ENCODE measurements at regions of chr2 and their contacts with region 1.

Region 1: GRCh38 chr2:48946449-48947048 is 191.0 kb upstream of the LHCGR start:
- DNase-seq: peak; percentile 23
- H3K4me3 Mint-ChIP-seq: no peak overlapping the region
- H3K27ac Mint-ChIP-seq: no peak overlapping the region
- H3K4me1 Mint-ChIP-seq: no peaks in the 10 kb centered on the region
- H3K27me3 Mint-ChIP-seq: peaks cover 2% of the 10 kb centered on the region

Region 2: GRCh38 chr2:48600204-48600813 is 346.2 kb before region 1 on chr2:
- CTCF ChIA-PET with region 1: no interaction called
- intact Hi-C with region 1: loop called (anchors 5 kb)
- DNase-seq: no peak
- H3K4me3 Mint-ChIP-seq: no peak overlapping the region
- H3K27ac Mint-ChIP-seq: no peak overlapping the region
- H3K4me1 Mint-ChIP-seq: no peaks in the 10 kb centered on the region
- H3K27me3 Mint-ChIP-seq: peaks cover 4% of the 10 kb centered on the region

Region 3: GRCh38 chr2:49236316-49236715 is 289.8 kb after region 1 on chr2:
- CTCF ChIA-PET with region 1: no interaction called
- intact Hi-C with region 1: no loop called
- DNase-seq: no peak
- H3K4me3 Mint-ChIP-seq: no peak overlapping the region
- H3K27ac Mint-ChIP-seq: no peak overlapping the region
- H3K4me1 Mint-ChIP-seq: no peaks in the 10 kb centered on the region
- H3K27me3 Mint-ChIP-seq: no peaks in the 10 kb centered on the region

Region 4: GRCh38 chr2:49490710-49491109 is 544.2 kb after region 1 on chr2:
- CTCF ChIA-PET with region 1: no interaction called
- intact Hi-C with region 1: loop called (anchors 5 kb)
- DNase-seq: peak; percentile 13
- H3K4me3 Mint-ChIP-seq: no peak overlapping the region
- H3K27ac Mint-ChIP-seq: no peak overlapping the region
- H3K4me1 Mint-ChIP-seq: no peaks in the 10 kb centered on the region
- H3K27me3 Mint-ChIP-seq: no peaks in the 10 kb centered on the region

Region 5: GRCh38 chr2:50143822-50144575 is 1197.5 kb after region 1 on chr2:
- CTCF ChIA-PET with region 1: interaction called, 3 read pairs
- intact Hi-C with region 1: loop called (anchors 1 kb)
- DNase-seq: no peak
- H3K4me3 Mint-ChIP-seq: no peak overlapping the region
- H3K27ac Mint-ChIP-seq: no peak overlapping the region
- H3K4me1 Mint-ChIP-seq: peaks cover 5% of the 10 kb centered on the region
- H3K27me3 Mint-ChIP-seq: no peaks in the 10 kb centered on the region

Region 6: GRCh38 chr2:50401772-50402653 is 1455.5 kb after region 1 on chr2:
- CTCF ChIA-PET with region 1: interaction called, 10 read pairs
- intact Hi-C with region 1: loop called (anchors 1 kb)
- DNase-seq: peak; percentile 59
- H3K4me3 Mint-ChIP-seq: no peak overlapping the region
- H3K27ac Mint-ChIP-seq: no peak overlapping the region
- H3K4me1 Mint-ChIP-seq: no peaks in the 10 kb centered on the region
- H3K27me3 Mint-ChIP-seq: no peaks in the 10 kb centered on the region

Region 7: GRCh38 chr2:50492477-50492851 is 1545.9 kb after region 1 on chr2:
- CTCF ChIA-PET with region 1: interaction called, 6 read pairs
- intact Hi-C with region 1: loop called (anchors 1 kb)
- DNase-seq: peak; percentile 39
- H3K4me3 Mint-ChIP-seq: no peak overlapping the region
- H3K27ac Mint-ChIP-seq: no peak overlapping the region
- H3K4me1 Mint-ChIP-seq: peaks cover 11% of the 10 kb centered on the region
- H3K27me3 Mint-ChIP-seq: peaks cover 5% of the 10 kb centered on the region

Measured in activated naive CD4-positive, alpha-beta T cell treated with anti-CD3 and anti-CD28 coated beads for 36 hours (primary cell).